ENCODE measurements at regions of chr15 and their contacts with region 1.

Region 1: DNA sequence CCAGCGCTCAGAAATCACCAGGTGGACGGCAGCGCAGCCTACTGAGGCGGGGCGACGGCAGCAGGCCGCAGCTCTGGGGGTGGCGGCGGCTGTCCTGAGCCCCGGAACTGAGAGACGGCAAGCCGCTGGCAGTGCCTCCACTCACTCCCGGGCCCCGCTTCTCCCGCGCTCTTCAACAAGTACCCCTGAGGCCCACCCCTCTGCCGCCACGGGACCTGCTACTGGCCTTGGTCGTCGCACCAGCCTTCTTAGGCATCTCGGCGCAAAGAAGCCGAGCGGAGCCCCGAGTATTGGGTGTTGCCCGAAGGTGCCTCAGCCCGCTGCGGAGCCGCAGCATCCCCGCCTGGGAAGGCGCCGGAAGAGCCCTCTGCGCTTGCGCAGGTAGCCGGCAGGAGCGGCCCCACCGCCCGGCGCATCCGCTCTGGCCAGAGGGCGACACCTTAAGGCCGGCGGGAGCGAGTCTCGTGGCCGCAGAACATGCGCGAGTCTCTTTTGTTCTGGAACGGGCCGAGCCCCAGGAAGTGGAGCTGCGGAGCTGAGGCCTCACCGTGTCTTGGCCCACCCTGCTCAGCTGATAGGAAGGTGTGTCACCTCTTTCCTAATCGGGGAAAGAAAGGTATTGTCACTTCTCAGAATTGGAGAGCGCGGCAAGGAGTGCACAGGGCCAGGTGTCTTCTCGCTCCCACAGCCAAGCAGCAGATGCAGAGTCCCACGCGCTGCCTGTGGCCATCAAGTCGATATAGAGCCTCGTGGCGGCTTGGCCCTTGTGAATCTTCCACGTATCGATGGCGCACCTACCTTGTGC is at the start of gene C15orf40:
- H3K4me3 Mint-ChIP-seq: peak within 1 kb of the TSS; percentile 94
- H3K27ac Mint-ChIP-seq: peak within 1 kb of the TSS; percentile 87
- H3K4me1 Mint-ChIP-seq: peaks cover 40% of the 10 kb centered on the region
- H3K27me3 Mint-ChIP-seq: no peaks in the 10 kb centered on the region

Region 2: GRCh38 chr15:83053151-83053550 is 41.7 kb after region 1 on chr15:
- intact Hi-C with region 1: no loop called
- H3K4me3 Mint-ChIP-seq: no peak overlapping the region
- H3K27ac Mint-ChIP-seq: no peak overlapping the region
- H3K4me1 Mint-ChIP-seq: peaks cover 15% of the 10 kb centered on the region
- H3K27me3 Mint-ChIP-seq: no peaks in the 10 kb centered on the region

Region 3: GRCh38 chr15:83108266-83109226 is 97.1 kb after region 1 on chr15:
- intact Hi-C with region 1: loop called (anchors 5 kb)
- H3K4me3 Mint-ChIP-seq: peak overlapping the region; percentile 91
- H3K27ac Mint-ChIP-seq: peak overlapping the region; percentile 96
- H3K4me1 Mint-ChIP-seq: peaks cover 69% of the 10 kb centered on the region
- H3K27me3 Mint-ChIP-seq: peaks cover 11% of the 10 kb centered on the region

Region 4: GRCh38 chr15:83207622-83208411 is 196.3 kb after region 1 on chr15 and contains the start of gene HDGFL3:
- intact Hi-C with region 1: loop called (anchors 5 kb)
- H3K4me3 Mint-ChIP-seq: peak within 1 kb of the TSS; percentile 73
- H3K27ac Mint-ChIP-seq: peak within 1 kb of the TSS; percentile 51
- H3K4me1 Mint-ChIP-seq: peaks cover 9% of the 10 kb centered on the region
- H3K27me3 Mint-ChIP-seq: peaks cover 15% of the 10 kb centered on the region

Region 5: GRCh38 chr15:84685304-84685703 is 1673.8 kb after region 1 on chr15:
- intact Hi-C with region 1: no loop called
- H3K4me3 Mint-ChIP-seq: peak overlapping the region; percentile 9
- H3K27ac Mint-ChIP-seq: peak overlapping the region; percentile 31
- H3K4me1 Mint-ChIP-seq: peaks cover 41% of the 10 kb centered on the region
- H3K27me3 Mint-ChIP-seq: no peaks in the 10 kb centered on the region

Measured in dendritic cell treated with granulocyte-macrophage colony-stimulating factor and Interleukin-4, amounts not matched to agents 40 ng/mL and 50 ng/mL, for 4 days (primary cell).